ENCODE measurements at regions of chr12 and their contacts with region 1.

Region 1: GRCh38 chr12:56476972-56477432 is 8.6 kb downstream of the SPRYD4 start:
- DNase-seq: no peak
- H3K4me3 ChIP-seq: no peak overlapping the region
- CTCF ChIP-seq: no peak

Region 2: GRCh38 chr12:56490360-56490759 is 13.4 kb after region 1 on chr12:
- CTCF ChIA-PET with region 1: interaction called, 13 read pairs
- POLR2A ChIA-PET with region 1: no interaction called
- DNase-seq: no peak
- H3K4me3 ChIP-seq: no peak overlapping the region
- CTCF ChIP-seq: no peak

Measured in AG04449 (cell line).